ENCODE measurements at regions of chr10 and their contacts with region 1.

Region 1: GRCh38 chr10:124152916-124153826 is 59.8 kb upstream of the CHST15 start:
- H3K4me3 Mint-ChIP-seq: no peak overlapping the region
- H3K27ac Mint-ChIP-seq: no peak overlapping the region
- H3K4me1 Mint-ChIP-seq: peaks cover 21% of the 10 kb centered on the region
- H3K27me3 Mint-ChIP-seq: peaks cover 39% of the 10 kb centered on the region

Region 2: GRCh38 chr10:123878666-123879303 is 274.4 kb before region 1 on chr10:
- intact Hi-C with region 1: no loop called
- H3K4me3 Mint-ChIP-seq: no peak overlapping the region
- H3K27ac Mint-ChIP-seq: no peak overlapping the region
- H3K4me1 Mint-ChIP-seq: no peaks in the 10 kb centered on the region
- H3K27me3 Mint-ChIP-seq: no peaks in the 10 kb centered on the region

Region 3: GRCh38 chr10:124099604-124100003 is 53.6 kb before region 1 on chr10:
- intact Hi-C with region 1: loop called (anchors 2 kb)
- H3K4me3 Mint-ChIP-seq: no peak overlapping the region
- H3K27ac Mint-ChIP-seq: peak overlapping the region; percentile 57
- H3K4me1 Mint-ChIP-seq: peaks cover 24% of the 10 kb centered on the region
- H3K27me3 Mint-ChIP-seq: peaks cover 48% of the 10 kb centered on the region

Region 4: GRCh38 chr10:124116771-124117510 is 36.2 kb before region 1 on chr10:
- intact Hi-C with region 1: no loop called
- H3K4me3 Mint-ChIP-seq: no peak overlapping the region
- H3K27ac Mint-ChIP-seq: peak overlapping the region; percentile 21
- H3K4me1 Mint-ChIP-seq: peaks cover 32% of the 10 kb centered on the region
- H3K27me3 Mint-ChIP-seq: peaks cover 19% of the 10 kb centered on the region

Region 5: GRCh38 chr10:124194199-124194824 is 41.1 kb after region 1 on chr10:
- intact Hi-C with region 1: no loop called
- H3K4me3 Mint-ChIP-seq: no peak overlapping the region
- H3K27ac Mint-ChIP-seq: no peak overlapping the region
- H3K4me1 Mint-ChIP-seq: peaks cover 66% of the 10 kb centered on the region
- H3K27me3 Mint-ChIP-seq: peaks cover 9% of the 10 kb centered on the region

Measured in dendritic cell treated with granulocyte-macrophage colony-stimulating factor and Interleukin-4, amounts not matched to agents 40 ng/mL and 50 ng/mL, for 4 days (primary cell).